K562 (cell line): ENCODE measurements at regions of chr7 and their contacts with region 1.

Region 1: GRCh38 chr7:134355927-134356326 is 39.2 kb upstream of the SLC35B4 start:
- DNase-seq: no peak
- ATAC-seq: no peak
- H3K4me3 ChIP-seq: no peak overlapping the region
- H3K27ac ChIP-seq: no peak overlapping the region
- H3K4me1 ChIP-seq: peaks cover 5 to 15% of the 10 kb centered on the region in 2 experiments; a peak in 3 of 5 replicates
- H3K27me3 ChIP-seq: peaks cover 20 to 22% of the 10 kb centered on the region in 2 experiments
- CTCF ChIP-seq: no peak
- EP300 ChIP-seq: no peak
- POLR2A ChIP-seq: no peak
- RAD21 ChIP-seq: no peak

Region 2: GRCh38 chr7:133904776-133905175 is 451.2 kb before region 1 on chr7:
- CTCF ChIA-PET with region 1: no interaction called
- POLR2A ChIA-PET with region 1: no interaction called
- in situ Hi-C with region 1: no loop called
- intact Hi-C with region 1: no loop called
- DNase-seq: no peak
- ATAC-seq: no peak
- H3K4me3 ChIP-seq: no peak overlapping the region
- H3K27ac ChIP-seq: no peak overlapping the region
- H3K4me1 ChIP-seq: no peaks in the 10 kb centered on the region
- H3K27me3 ChIP-seq: no peaks in the 10 kb centered on the region
- CTCF ChIP-seq: no peak
- EP300 ChIP-seq: no peak
- POLR2A ChIP-seq: no peak
- RAD21 ChIP-seq: no peak

Region 3: GRCh38 chr7:134140889-134141867 is 214.7 kb before region 1 on chr7:
- CTCF ChIA-PET with region 1: no interaction called
- POLR2A ChIA-PET with region 1: no interaction called
- in situ Hi-C with region 1: no loop called
- intact Hi-C with region 1: loop called (anchors 10 kb)
- DNase-seq: peak; percentile 89 to 92 (median 90)
- ATAC-seq: peak; percentile 99
- H3K4me3 ChIP-seq: no peak overlapping the region
- H3K27ac ChIP-seq: no peak overlapping the region
- H3K4me1 ChIP-seq: peaks cover 0 to 3% of the 10 kb centered on the region in 2 experiments; a peak in 2 of 5 replicates
- H3K27me3 ChIP-seq: peaks cover 0 to 4% of the 10 kb centered on the region in 2 experiments; a peak in 1 of 5 replicates
- CTCF ChIP-seq: peak; percentile 92 to 98 (median 97)
- EP300 ChIP-seq: 0 out of 2 replicates have a peak, but pooled peaks have one; percentile 13
- POLR2A ChIP-seq: no peak
- RAD21 ChIP-seq: peak; percentile 93 to 95

Region 4: DNA sequence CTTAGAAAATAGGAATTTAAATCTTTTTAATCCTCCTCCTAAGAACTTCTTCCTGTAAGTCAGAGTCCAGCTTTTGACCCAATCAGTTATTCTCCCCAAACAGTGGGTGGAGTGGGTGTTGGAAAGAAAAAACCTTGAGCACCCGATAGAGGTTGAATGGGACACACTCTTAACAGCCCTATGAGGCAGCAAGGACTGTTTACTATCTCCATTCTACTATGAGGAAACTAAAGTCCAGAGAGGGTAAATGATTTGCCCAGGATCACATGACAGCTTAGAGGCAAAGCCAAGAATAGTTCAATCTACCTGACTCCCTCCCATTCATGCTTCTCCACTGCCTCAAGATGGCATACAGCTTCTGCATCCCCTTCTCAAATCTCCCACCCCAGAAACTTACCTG is 18.4 kb after region 1 on chr7:
- CTCF ChIA-PET with region 1: no interaction called
- POLR2A ChIA-PET with region 1: no interaction called
- in situ Hi-C with region 1: no loop called
- intact Hi-C with region 1: no loop called
- DNase-seq: no peak
- ATAC-seq: no peak
- H3K4me3 ChIP-seq: no peak overlapping the region
- H3K27ac ChIP-seq: no peak overlapping the region
- H3K4me1 ChIP-seq: no peaks in the 10 kb centered on the region
- H3K27me3 ChIP-seq: peaks cover 28 to 38% of the 10 kb centered on the region in 2 experiments
- CTCF ChIP-seq: no peak
- EP300 ChIP-seq: no peak
- POLR2A ChIP-seq: no peak
- RAD21 ChIP-seq: no peak